CD4-positive, alpha-beta memory T cell (primary cell): ENCODE measurements at regions of chr4 and their contacts with region 1.

Region 1: GRCh38 chr4:88533937-88534750 is 10.6 kb upstream of the PYURF start:
- DNase-seq: no peak
- H3K4me3 ChIP-seq: no peak overlapping the region
- H3K4me3 Mint-ChIP-seq: no peak overlapping the region
- H3K27ac ChIP-seq: no peak overlapping the region
- H3K27ac Mint-ChIP-seq: no peak overlapping the region
- H3K4me1 ChIP-seq: peaks cover 3% of the 10 kb centered on the region
- H3K4me1 Mint-ChIP-seq: peaks cover 0 to under 1% (median 0%) of the 10 kb centered on the region in 4 donors
- H3K27me3 ChIP-seq: no peaks in the 10 kb centered on the region
- H3K27me3 Mint-ChIP-seq: no peaks in the 10 kb centered on the region

Region 2: GRCh38 chr4:88549815-88550214 is 15.7 kb after region 1 on chr4:
- CTCF ChIA-PET with region 1: interaction called, 18 read pairs
- POLR2A ChIA-PET with region 1: no interaction called
- intact Hi-C with region 1: no loop called
- DNase-seq: no peak
- H3K4me3 ChIP-seq: no peak overlapping the region
- H3K4me3 Mint-ChIP-seq: no peak overlapping the region
- H3K27ac ChIP-seq: no peak overlapping the region
- H3K27ac Mint-ChIP-seq: no peak overlapping the region
- H3K4me1 ChIP-seq: no peaks in the 10 kb centered on the region
- H3K4me1 Mint-ChIP-seq: no peaks in the 10 kb centered on the region
- H3K27me3 ChIP-seq: no peaks in the 10 kb centered on the region
- H3K27me3 Mint-ChIP-seq: no peaks in the 10 kb centered on the region

Region 3: GRCh38 chr4:88613417-88613875 is 79.3 kb after region 1 on chr4:
- CTCF ChIA-PET with region 1: interaction called, 23 read pairs
- POLR2A ChIA-PET with region 1: interaction called, 7 read pairs
- intact Hi-C with region 1: no loop called
- DNase-seq: peak; percentile 76 to 87 (median 84)
- H3K4me3 ChIP-seq: peak overlapping the region in 1 of 2 donors; percentile 43
- H3K4me3 Mint-ChIP-seq: peak overlapping the region; percentile 69 to 88 (median 79)
- H3K27ac ChIP-seq: peak overlapping the region; percentile 62
- H3K27ac Mint-ChIP-seq: peak overlapping the region; percentile 93 to 99 (median 97)
- H3K4me1 ChIP-seq: peaks cover 67% of the 10 kb centered on the region
- H3K4me1 Mint-ChIP-seq: peaks cover 65 to 91% (median 77%) of the 10 kb centered on the region in 4 donors
- H3K27me3 ChIP-seq: no peaks in the 10 kb centered on the region
- H3K27me3 Mint-ChIP-seq: no peaks in the 10 kb centered on the region

Region 4: DNA sequence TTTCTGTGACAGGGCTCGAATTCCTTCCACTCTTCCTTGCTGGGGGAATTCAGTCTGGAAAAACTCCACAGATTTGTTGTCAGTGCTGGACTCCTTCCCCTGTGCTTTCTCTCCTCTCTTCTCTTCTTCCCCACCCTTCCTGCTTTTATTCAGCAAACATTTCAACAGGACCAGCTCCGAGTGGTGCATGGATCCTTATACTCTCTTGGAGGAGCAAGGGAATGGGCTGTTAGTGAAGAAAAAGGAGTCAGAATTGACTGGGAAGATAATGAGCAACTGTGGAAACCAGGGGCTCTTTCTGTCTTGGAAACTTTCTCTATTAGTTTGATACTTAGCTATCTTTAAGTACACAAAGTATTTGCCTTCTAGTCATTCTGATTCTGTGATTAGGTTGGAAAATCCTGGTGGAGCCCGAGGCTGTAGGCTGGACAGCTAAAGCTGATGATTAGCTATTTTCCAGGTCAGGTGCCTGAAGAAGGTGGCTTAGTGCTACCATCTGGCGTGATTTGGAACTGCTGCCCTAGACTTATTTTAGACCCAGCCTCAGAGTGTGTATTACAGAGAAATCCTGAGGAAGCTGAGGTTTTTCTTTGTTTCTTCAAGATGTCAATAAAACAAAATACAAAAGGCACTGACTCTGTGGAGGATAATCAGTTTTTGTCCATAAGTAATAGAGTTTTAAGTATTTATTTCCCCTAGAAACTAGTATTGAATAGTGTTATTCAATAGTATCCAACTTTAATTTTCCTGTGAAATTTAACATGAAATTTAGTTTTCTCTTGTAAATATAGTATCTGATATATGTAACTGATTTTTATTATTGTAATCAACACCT is 125.1 kb after region 1 on chr4:
- CTCF ChIA-PET with region 1: interaction called, 155 read pairs
- POLR2A ChIA-PET with region 1: no interaction called
- intact Hi-C with region 1: loop called (anchors 1 kb)
- DNase-seq: peak; percentile 32 to 47 (median 41)
- H3K4me3 ChIP-seq: no peak overlapping the region
- H3K4me3 Mint-ChIP-seq: no peak overlapping the region
- H3K27ac ChIP-seq: no peak overlapping the region
- H3K27ac Mint-ChIP-seq: peak overlapping the region in 5 of 7 donors; percentile 2 to 71 (median 55)
- H3K4me1 ChIP-seq: peaks cover 5% of the 10 kb centered on the region
- H3K4me1 Mint-ChIP-seq: peaks cover 6 to 18% (median 9%) of the 10 kb centered on the region in 4 donors
- H3K27me3 ChIP-seq: no peaks in the 10 kb centered on the region
- H3K27me3 Mint-ChIP-seq: no peaks in the 10 kb centered on the region

Region 5: DNA sequence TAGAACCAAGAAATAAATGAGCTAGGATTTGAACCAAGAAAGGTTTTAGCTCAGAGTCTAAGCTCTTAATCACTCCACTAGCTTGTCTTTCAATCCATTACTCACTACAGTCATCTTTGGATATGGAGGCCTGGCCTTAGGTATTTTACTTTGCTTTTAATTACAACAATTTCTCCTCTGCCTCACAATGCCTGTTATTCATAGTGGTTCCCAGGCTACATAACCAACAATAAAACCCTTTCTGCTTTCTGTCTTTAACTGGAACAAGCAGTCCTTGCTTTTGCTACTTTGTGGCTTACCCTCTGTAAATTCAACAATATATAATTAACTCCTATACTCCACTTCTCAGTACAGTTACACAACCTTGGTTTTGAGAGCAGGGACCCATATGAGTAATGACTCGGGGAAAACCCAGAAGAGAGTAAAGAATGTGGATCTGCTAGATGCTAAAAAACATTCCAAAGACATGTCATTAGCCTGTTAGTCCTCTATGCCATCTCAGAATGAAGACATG is 258.2 kb after region 1 on chr4:
- CTCF ChIA-PET with region 1: interaction called, 18 read pairs
- POLR2A ChIA-PET with region 1: no interaction called
- intact Hi-C with region 1: loop called (anchors 2 kb)
- DNase-seq: no peak
- H3K4me3 ChIP-seq: no peak overlapping the region
- H3K4me3 Mint-ChIP-seq: no peak overlapping the region
- H3K27ac ChIP-seq: no peak overlapping the region
- H3K27ac Mint-ChIP-seq: peak overlapping the region in 1 of 7 donors; percentile 60
- H3K4me1 ChIP-seq: no peaks in the 10 kb centered on the region
- H3K4me1 Mint-ChIP-seq: peaks cover 0 to 9% (median 8%) of the 10 kb centered on the region in 4 donors
- H3K27me3 ChIP-seq: no peaks in the 10 kb centered on the region
- H3K27me3 Mint-ChIP-seq: no peaks in the 10 kb centered on the region